Activated B cell treated with CpG ODN at 0.5 μM for 24 hours (primary cell): ENCODE measurements at regions of chr12 and their contacts with region 1.

Region 1: DNA sequence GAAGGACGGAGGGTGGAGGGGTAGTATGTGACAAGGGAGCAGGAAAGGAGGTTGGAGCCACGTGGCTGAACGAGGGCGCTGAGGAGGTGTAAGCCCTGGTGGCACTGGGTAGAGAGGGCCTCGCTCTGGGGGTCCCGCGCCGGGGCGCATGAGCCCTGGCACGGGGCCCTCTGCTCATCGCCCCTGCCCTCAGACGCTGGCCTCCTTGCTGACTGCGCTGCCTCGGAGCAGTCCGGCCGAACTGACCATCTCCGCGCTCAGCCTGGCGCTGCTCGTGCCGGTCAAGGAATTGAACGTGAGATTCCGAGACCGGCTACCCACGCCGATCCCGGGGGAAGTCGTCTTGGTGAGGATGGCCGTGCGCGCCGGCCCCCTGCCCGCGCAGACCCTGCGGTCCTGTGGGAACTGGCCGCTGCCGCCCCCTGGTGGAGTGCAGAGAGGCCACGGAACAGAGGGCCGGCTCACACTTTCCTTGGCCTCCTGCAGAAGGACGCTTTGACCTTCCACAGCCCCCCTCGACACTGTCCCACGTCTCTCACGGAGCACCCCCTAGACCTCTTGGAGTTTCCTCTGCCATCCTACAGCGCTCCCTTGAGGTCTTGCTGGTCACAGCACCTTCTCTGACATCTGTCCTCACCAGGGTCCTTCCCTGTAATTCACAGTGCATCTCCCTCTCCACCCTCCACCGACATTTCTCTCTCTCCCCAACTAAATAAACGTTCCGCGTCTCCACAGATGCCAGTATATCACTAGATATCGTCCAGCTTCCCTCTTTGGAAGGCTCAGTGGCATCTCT is 10.5 kb downstream of the ARHGEF25 start:
- DNase-seq: peak; percentile 64
- ATAC-seq: peak; percentile 75
- H3K4me3 Mint-ChIP-seq: peak overlapping the region; percentile 77
- H3K27ac Mint-ChIP-seq: no peak overlapping the region
- H3K4me1 Mint-ChIP-seq: peaks cover 35% of the 10 kb centered on the region
- H3K27me3 Mint-ChIP-seq: peaks cover 82% of the 10 kb centered on the region
- CTCF ChIP-seq: no peak

Region 2: GRCh38 chr12:57229634-57230380 is 391.9 kb before region 1 on chr12 and contains the start of gene SHMT2:
- CTCF ChIA-PET with region 1: no interaction called
- POLR2A ChIA-PET with region 1: no interaction called
- intact Hi-C with region 1: loop called (anchors 10 kb)
- DNase-seq: peak; percentile 76
- ATAC-seq: peak; percentile 56
- H3K4me3 Mint-ChIP-seq: peak within 1 kb of the TSS; percentile 98
- H3K27ac Mint-ChIP-seq: peak within 1 kb of the TSS; percentile 97
- H3K4me1 Mint-ChIP-seq: peaks cover 86% of the 10 kb centered on the region
- H3K27me3 Mint-ChIP-seq: peaks cover 3% of the 10 kb centered on the region
- CTCF ChIP-seq: no peak
- total RNA-seq, gene SHMT2: 268 and 270 TPM in 2 replicates

Region 3: DNA sequence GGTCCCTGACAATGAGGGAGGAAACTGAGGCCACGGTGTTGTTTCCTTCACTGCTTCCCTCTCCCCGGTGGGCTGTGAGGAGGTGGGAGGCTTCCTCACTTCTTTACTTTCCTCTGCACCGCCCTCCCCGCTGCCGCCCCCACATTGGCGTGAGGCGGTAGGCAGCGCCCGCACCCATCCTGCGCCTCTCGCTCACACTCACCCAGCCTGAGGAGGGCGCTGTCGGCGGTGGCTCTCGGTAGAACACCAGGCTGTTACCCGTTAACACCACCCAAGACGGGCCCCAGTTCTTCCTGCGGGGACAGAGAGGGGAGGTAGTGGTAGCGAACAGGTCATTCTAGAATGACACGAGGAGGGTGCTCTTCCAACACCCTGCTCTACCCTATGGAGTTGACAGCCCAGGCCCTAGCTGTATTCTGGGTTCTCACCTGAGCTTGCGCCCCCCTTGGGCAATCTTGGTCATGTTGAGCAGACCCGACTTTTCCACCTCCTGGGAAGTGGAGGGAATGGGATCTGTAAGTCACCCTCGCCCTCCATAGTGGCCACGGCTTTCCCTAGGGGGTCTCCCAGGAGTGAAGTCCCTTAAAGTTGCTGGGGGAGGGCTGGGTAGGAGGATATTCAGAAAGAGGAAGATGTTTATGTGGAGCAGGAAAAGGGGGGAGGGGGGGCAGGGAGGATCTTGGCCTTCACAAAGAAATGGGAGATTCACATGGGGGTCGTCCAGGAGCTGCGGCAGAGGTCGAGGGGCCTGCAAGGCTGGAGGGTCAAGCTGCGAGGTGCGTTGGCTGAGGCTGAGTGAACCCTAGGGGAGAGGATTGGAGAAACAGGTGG is 145.3 kb before region 1 on chr12:
- CTCF ChIA-PET with region 1: no interaction called
- POLR2A ChIA-PET with region 1: no interaction called
- intact Hi-C with region 1: loop called (anchors 1 kb)
- DNase-seq: peak; percentile 54
- ATAC-seq: peak; percentile 38
- H3K4me3 Mint-ChIP-seq: peak overlapping the region; percentile 93
- H3K27ac Mint-ChIP-seq: peak overlapping the region; percentile 100
- H3K4me1 Mint-ChIP-seq: peaks cover 80% of the 10 kb centered on the region
- H3K27me3 Mint-ChIP-seq: no peaks in the 10 kb centered on the region
- CTCF ChIP-seq: no peak

Region 4: GRCh38 chr12:57546438-57547383 is 75.0 kb before region 1 on chr12 and contains the start of gene DCTN2:
- CTCF ChIA-PET with region 1: no interaction called
- POLR2A ChIA-PET with region 1: no interaction called
- intact Hi-C with region 1: no loop called
- DNase-seq: peak; percentile 81
- ATAC-seq: peak; percentile 97
- H3K4me3 Mint-ChIP-seq: peak within 1 kb of the TSS; percentile 99
- H3K27ac Mint-ChIP-seq: peak within 1 kb of the TSS; percentile 84
- H3K4me1 Mint-ChIP-seq: peaks cover 36% of the 10 kb centered on the region
- H3K27me3 Mint-ChIP-seq: peaks cover 10% of the 10 kb centered on the region
- CTCF ChIP-seq: no peak
- total RNA-seq, gene DCTN2: 83.3 and 91.8 TPM in 2 replicates

Region 5: GRCh38 chr12:57583008-57583831 is 38.5 kb before region 1 on chr12:
- CTCF ChIA-PET with region 1: interaction called, 126 read pairs
- POLR2A ChIA-PET with region 1: interaction called, 14 read pairs
- intact Hi-C with region 1: loop called (anchors 1 kb)
- DNase-seq: peak; percentile 24
- ATAC-seq: peak; percentile 100
- H3K4me3 Mint-ChIP-seq: no peak overlapping the region
- H3K27ac Mint-ChIP-seq: no peak overlapping the region
- H3K4me1 Mint-ChIP-seq: peaks cover 4% of the 10 kb centered on the region
- H3K27me3 Mint-ChIP-seq: peaks cover 12% of the 10 kb centered on the region
- CTCF ChIP-seq: peak; percentile 85

Region 6: DNA sequence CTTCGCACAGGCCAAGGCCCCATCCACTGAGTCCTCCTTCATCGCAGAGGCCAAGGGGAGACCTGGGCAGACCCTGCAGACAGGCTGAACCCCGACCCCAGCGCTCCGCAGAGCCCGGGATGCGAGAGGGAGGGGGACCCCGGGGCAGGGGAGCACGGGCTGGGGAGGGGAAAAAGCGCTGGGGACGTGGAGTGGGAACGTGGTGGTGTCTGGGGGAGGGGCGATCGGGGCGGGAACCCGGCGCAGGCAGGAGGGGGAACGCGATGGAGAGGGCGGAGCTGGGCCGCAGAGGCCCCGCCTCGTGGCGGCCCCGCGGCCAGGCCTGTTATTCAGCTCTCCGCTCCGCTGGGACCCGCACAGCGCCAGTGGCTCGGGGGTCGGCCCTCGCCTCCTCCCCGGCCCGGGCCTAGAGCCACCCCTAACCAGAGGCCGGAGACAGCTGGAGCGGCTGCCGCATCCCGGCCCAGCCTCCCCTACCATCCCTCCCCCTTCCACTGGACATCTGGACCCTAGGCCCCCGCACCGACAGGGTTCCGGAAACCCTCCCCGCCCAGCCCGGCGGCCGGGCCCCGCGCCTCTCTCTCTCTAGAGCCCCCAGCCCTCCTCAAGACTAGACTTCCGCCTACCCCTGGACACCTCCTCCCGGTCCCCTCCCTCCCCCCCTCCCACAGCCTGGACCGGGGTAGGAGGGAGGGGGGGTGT is 10.4 kb before region 1 on chr12 and contains the start of gene ARHGEF25:
- CTCF ChIA-PET with region 1: interaction called, 5 read pairs
- POLR2A ChIA-PET with region 1: interaction called, 4 read pairs
- intact Hi-C with region 1: loop called (anchors 1 kb)
- DNase-seq: no peak
- ATAC-seq: peak; percentile 38
- H3K4me3 Mint-ChIP-seq: peak within 1 kb of the TSS; percentile 75
- H3K27ac Mint-ChIP-seq: no peak within 1 kb of the TSS
- H3K4me1 Mint-ChIP-seq: peaks cover 39% of the 10 kb centered on the region
- H3K27me3 Mint-ChIP-seq: peaks cover 30% of the 10 kb centered on the region
- CTCF ChIP-seq: no peak
- total RNA-seq, gene ARHGEF25: not detected in 2 replicates

Region 7: DNA sequence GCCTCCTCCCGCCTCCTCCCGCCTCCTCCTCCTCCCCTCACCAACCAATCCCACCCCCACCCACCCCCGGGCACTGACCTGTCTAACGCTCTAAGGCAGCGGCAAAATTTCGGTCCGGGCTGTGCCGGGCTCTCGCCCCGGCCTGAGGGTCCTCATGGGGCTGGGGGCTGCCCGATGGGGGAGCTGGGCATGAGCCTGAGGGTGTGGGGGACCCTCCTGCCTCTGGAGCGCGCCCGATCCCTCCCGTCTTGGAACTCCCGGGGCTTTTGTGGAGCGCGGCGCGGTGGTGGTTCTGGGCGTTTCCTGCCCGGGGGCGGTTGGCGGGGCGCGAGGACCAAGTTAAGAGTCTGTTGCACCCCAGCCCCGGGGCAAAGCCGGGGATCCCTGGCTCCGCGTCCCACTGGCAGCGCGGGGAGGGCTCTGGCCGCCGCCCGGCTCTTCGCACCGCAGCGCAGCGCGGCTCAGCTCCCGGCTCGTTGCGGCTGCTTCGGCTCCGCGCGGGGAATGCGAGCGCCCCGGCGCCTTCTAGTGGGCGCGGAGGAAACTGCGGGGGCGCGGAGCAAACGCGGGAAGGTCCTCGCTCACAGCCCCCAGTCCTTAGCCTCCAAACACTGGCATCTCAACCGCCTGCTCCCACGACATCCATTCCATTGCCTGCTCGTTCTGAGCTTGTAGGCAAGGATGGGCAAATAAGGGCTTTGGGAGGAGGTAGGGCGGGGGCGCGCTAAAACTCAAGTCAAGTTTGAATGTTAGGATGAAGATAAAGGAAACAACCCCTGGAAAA is 11.2 kb after region 1 on chr12 and contains the start of gene B4GALNT1:
- CTCF ChIA-PET with region 1: interaction called, 6 read pairs
- POLR2A ChIA-PET with region 1: interaction called, 6 read pairs
- intact Hi-C with region 1: loop called (anchors 1 kb)
- DNase-seq: peak; percentile 75
- ATAC-seq: peak; percentile 94
- H3K4me3 Mint-ChIP-seq: peak within 1 kb of the TSS; percentile 73
- H3K27ac Mint-ChIP-seq: no peak within 1 kb of the TSS
- H3K4me1 Mint-ChIP-seq: peaks cover 12% of the 10 kb centered on the region
- H3K27me3 Mint-ChIP-seq: peaks cover 46% of the 10 kb centered on the region
- CTCF ChIP-seq: peak; percentile 27
- total RNA-seq, gene B4GALNT1: 0.31 and 0.51 TPM in 2 replicates